Naive thymus-derived CD4-positive, alpha-beta T cell (primary cell): ENCODE measurements at regions of chr17 and their contacts with region 1.

Region 1: DNA sequence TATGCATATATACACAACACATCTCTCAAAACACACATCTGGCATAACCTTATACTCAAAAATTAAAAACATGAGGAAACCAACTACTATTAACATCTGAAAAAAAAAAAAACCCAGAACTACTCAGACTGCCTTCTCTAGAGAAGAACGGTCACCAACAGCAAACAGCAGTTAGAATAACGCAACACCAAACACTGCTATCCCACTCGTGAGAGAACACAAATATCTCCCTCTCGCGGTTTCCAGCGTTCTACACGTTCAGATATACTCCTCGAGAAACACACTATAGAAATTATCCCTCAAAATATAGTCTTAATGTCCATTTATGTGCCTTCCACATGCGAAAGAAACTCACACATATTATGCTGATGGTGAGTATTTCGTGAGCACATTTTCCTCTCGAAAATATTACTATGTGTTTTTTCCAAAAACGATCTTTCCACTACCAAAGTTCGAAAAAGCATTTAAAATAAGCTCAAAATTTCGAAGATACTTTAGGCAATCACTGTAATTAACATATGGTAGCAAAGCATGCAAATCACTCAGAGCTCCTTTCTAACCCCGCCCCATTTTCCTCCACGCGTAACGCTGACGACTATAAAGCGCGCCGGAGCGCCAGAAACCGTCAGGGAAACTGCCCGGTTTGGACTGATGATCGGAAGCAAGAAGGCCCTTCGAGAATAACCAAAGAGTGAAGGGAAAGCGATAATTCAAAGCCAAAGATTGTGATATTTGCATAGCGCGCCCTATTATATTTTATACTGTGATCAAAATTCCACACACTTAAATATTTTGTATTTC is 60.1 kb downstream of the TEX14 start:
- DNase-seq: peak; percentile 74 to 95 (median 92)
- ATAC-seq: peak; percentile 90
- H3K4me3 ChIP-seq: peak overlapping the region; percentile 46
- H3K4me3 Mint-ChIP-seq: no peak overlapping the region
- H3K27ac ChIP-seq: peak overlapping the region; percentile 78
- H3K27ac Mint-ChIP-seq: no peak overlapping the region
- H3K4me1 ChIP-seq: peaks cover 6 to 12% of the 10 kb centered on the region in 2 donors
- H3K4me1 Mint-ChIP-seq: peaks cover 0 to 9% (median 5%) of the 10 kb centered on the region in 7 donors
- H3K27me3 ChIP-seq: no peaks in the 10 kb centered on the region
- H3K27me3 Mint-ChIP-seq: peaks cover 0 to 2% (median 0%) of the 10 kb centered on the region in 5 donors

Region 2: DNA sequence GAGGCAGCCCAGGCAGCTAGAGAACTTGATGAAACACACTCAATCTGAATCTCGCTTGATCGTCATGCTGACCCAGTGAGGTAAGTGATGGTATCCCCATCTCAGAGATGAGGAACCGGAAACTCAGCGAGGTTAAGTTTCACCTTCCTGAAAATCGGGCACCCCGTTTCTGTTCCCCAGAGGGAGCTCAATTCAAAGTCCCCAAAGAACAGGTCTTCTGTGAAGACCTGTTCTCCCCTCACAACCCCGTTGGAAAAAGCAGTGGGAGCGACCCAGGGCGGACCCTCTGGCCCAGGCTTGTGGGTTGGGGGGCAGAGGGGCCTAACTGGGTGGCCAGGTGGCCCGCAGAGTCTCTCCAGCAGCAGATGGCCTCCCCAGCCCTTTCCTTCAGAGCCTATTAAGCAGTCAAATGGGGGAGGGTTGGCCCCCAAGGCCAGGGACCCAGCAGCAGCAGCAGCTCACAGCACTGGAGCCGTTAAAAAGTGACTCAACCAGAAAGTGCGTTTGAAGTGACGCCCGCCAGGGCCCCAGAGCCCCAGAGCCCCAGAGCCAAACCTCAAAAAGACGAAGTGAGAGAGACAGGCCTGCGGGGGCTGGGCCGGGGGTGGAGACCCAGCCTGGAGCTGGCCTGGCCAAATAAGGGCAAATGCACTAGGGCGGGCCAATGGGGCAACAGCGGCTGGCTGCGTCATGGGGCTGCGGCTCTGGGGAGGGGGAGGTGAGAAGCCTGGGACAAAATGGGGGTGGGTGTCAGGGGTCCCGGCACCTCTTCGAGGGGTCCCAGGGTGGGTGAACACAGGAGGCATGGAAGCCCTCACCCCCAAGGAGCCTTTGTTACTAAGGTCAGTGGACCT is 293.9 kb before region 1 on chr17:
- CTCF ChIA-PET with region 1: no interaction called
- POLR2A ChIA-PET with region 1: interaction called, 14 read pairs
- intact Hi-C with region 1: loop called (anchors 5 kb)
- DNase-seq: peak; percentile 73 to 93 (median 85)
- ATAC-seq: peak; percentile 88
- H3K4me3 ChIP-seq: peak overlapping the region; percentile 98
- H3K4me3 Mint-ChIP-seq: peak overlapping the region; percentile 86 to 100 (median 97)
- H3K27ac ChIP-seq: peak overlapping the region; percentile 98
- H3K27ac Mint-ChIP-seq: peak overlapping the region; percentile 89 to 100 (median 95)
- H3K4me1 ChIP-seq: peaks cover 59 to 77% of the 10 kb centered on the region in 2 donors
- H3K4me1 Mint-ChIP-seq: peaks cover 52 to 90% (median 65%) of the 10 kb centered on the region in 7 donors
- H3K27me3 ChIP-seq: no peaks in the 10 kb centered on the region
- H3K27me3 Mint-ChIP-seq: no peaks in the 10 kb centered on the region

Region 3: GRCh38 chr17:58417300-58418092 is 214.2 kb before region 1 on chr17 and contains the start of gene RNF43:
- CTCF ChIA-PET with region 1: no interaction called
- POLR2A ChIA-PET with region 1: no interaction called
- intact Hi-C with region 1: no loop called
- DNase-seq: peak; percentile 63 to 94 (median 90)
- ATAC-seq: peak; percentile 100
- H3K4me3 ChIP-seq: no peak within 1 kb of the TSS
- H3K4me3 Mint-ChIP-seq: peak within 1 kb of the TSS in 6 of 10 donors; percentile 0 to 69 (median 32)
- H3K27ac ChIP-seq: peak within 1 kb of the TSS; percentile 24
- H3K27ac Mint-ChIP-seq: peak within 1 kb of the TSS; percentile 1 to 94 (median 51)
- H3K4me1 ChIP-seq: peaks cover 0 to 9% of the 10 kb centered on the region in 2 donors
- H3K4me1 Mint-ChIP-seq: peaks cover 9 to 27% (median 14%) of the 10 kb centered on the region in 7 donors
- H3K27me3 ChIP-seq: no peaks in the 10 kb centered on the region
- H3K27me3 Mint-ChIP-seq: no peaks in the 10 kb centered on the region
- total RNA-seq, gene RNF43: 0.48 to 2.2 (median 1.9) TPM

Region 4: DNA sequence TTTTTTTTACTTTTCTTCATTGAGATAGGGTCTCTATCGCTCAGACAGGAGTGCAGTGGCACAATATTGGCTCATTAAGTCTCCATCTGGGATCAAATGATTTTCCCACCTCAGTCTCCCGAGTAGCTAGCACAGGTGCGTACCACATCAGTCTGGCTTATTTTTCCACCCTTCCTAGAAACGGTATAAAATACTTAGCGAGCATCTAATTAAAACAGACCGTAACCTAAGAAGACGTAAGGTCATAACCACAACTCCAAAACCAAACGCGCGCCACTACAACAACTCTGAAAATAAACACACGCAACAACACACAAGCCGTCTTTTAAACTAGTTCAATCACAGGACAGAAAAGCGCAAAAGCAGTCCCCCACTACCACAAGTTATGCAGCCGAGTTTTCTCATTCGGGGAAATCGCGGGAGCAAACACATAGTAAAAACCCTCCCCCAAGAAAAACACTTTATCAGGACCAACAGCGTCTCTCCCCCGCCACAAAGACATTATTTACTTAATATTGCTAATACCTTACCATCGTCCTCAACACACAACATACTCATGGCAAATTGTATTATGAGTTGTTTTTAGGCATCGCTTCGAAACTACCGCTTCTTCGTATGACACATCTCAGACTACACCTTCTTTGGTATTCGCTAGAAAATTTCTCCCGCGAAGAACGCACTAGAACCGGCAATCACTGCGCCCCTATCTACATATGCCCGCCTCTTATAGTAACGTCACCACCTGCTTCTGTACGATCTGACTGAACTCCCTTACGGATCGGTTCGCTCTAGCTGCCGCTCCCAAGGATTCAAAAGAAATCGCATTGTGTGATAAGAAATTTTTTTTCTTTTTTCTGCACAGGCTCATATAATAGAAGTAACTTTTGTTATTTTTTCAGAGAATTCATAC is 27.3 kb after region 1 on chr17:
- CTCF ChIA-PET with region 1: no interaction called
- POLR2A ChIA-PET with region 1: interaction called, 30 read pairs
- intact Hi-C with region 1: loop called (anchors 1 kb)
- DNase-seq: peak; percentile 47 to 89 (median 82)
- ATAC-seq: peak; percentile 88
- H3K4me3 ChIP-seq: peak overlapping the region; percentile 44
- H3K4me3 Mint-ChIP-seq: peak overlapping the region; percentile 83 to 93 (median 88)
- H3K27ac ChIP-seq: peak overlapping the region; percentile 82
- H3K27ac Mint-ChIP-seq: peak overlapping the region; percentile 94 to 100 (median 97)
- H3K4me1 ChIP-seq: no peaks in the 10 kb centered on the region
- H3K4me1 Mint-ChIP-seq: peaks cover 10 to 20% (median 15%) of the 10 kb centered on the region in 7 donors
- H3K27me3 ChIP-seq: no peaks in the 10 kb centered on the region
- H3K27me3 Mint-ChIP-seq: peaks cover 0 to 11% (median 0%) of the 10 kb centered on the region in 5 donors

Region 5: DNA sequence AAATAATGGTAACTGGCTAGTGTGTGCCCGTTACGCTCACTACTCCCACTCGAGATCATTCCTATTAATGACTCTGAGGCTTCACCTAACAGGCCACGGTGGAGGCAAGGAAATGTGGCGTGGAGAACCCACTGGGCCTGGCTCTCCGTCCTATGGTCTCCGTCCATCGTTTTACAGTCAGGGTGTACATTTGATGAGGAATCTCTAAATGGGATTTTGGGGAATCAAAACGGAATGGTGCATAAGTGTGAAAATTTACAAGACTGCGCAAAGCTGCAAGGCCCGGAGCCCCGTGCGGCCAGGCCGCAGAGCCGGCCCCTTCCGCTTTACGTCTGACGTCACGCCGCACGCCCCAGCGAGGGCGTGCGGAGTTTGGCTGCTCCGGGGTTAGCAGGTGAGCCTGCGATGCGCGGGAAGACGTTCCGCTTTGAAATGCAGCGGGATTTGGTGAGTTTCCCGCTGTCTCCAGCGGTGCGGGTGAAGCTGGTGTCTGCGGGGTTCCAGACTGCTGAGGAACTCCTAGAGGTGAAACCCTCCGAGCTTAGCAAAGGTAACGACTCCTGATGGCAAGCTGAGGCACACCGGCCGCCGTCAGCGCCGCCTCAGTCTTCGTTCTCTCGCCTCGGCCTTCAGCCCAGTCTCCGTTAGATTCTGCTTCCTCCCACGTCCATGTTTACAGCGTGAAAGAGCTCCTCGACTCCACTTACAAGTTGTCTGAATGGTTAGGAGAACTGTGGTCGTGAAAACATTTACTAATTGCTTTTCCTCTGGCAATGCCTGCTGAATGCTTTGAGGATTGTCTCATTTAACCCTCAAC is 60.7 kb after region 1 on chr17 and contains the start of gene RAD51C:
- CTCF ChIA-PET with region 1: interaction called, 3 read pairs
- POLR2A ChIA-PET with region 1: interaction called, 18 read pairs
- intact Hi-C with region 1: loop called (anchors 1 kb)
- DNase-seq: peak; percentile 66 to 86 (median 82)
- ATAC-seq: peak; percentile 99
- H3K4me3 ChIP-seq: peak within 1 kb of the TSS; percentile 75
- H3K4me3 Mint-ChIP-seq: peak within 1 kb of the TSS; percentile 85 to 99 (median 94)
- H3K27ac ChIP-seq: peak within 1 kb of the TSS; percentile 77
- H3K27ac Mint-ChIP-seq: peak within 1 kb of the TSS; percentile 87 to 96 (median 89)
- H3K4me1 ChIP-seq: peaks cover 12 to 17% of the 10 kb centered on the region in 2 donors
- H3K4me1 Mint-ChIP-seq: peaks cover 20 to 37% (median 31%) of the 10 kb centered on the region in 7 donors
- H3K27me3 ChIP-seq: no peaks in the 10 kb centered on the region
- H3K27me3 Mint-ChIP-seq: peaks cover 0 to 2% (median 0%) of the 10 kb centered on the region in 5 donors
- total RNA-seq, gene RAD51C: 11.4 to 52.6 (median 27.8) TPM